Tibial artery (tissue), 4 donors: ENCODE measurements at regions of chr3 and their contacts with region 1.

Region 1: DNA sequence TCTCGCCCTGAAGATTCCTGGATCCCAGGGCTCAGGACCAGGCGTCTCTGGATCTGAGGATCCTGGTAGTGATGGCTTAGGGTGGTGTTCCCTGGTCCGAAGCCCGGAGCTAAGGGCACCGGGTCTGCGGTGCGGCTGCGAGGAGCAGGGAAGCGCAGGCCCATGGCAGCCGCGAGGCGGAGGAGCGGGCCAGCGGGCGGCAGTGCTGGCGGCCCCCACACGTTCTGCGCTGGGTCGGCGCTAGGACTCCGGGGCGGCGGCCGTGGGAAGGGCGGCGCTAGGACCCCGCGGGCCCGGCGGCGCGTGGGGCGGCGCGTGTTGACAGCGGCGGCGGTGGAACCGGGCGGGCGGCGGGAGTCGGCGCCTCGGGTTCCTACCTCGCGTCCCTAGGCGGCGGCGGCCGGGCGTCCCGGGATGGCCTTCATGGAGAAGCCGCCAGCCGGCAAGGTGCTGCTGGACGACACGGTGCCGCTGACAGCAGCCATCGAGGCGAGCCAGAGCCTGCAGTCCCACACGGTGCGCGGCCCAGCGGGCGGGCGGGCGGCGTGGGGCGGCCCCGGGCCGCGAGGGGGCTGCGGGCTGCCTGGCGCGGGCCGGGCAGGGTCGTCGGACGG is at the start of gene PXK:
- DNase-seq: peak; percentile 66 to 89
- H3K4me3 ChIP-seq: peak within 1 kb of the TSS; percentile 89 to 90
- H3K27ac ChIP-seq: peak within 1 kb of the TSS; percentile 59 to 71
- H3K4me1 ChIP-seq: peaks cover 0 to 39% (median 15%) of the 10 kb centered on the region in 4 donors
- H3K27me3 ChIP-seq: no peaks in the 10 kb centered on the region
- CTCF ChIP-seq: peak in 1 of 2 experiments; percentile 19

Region 2: DNA sequence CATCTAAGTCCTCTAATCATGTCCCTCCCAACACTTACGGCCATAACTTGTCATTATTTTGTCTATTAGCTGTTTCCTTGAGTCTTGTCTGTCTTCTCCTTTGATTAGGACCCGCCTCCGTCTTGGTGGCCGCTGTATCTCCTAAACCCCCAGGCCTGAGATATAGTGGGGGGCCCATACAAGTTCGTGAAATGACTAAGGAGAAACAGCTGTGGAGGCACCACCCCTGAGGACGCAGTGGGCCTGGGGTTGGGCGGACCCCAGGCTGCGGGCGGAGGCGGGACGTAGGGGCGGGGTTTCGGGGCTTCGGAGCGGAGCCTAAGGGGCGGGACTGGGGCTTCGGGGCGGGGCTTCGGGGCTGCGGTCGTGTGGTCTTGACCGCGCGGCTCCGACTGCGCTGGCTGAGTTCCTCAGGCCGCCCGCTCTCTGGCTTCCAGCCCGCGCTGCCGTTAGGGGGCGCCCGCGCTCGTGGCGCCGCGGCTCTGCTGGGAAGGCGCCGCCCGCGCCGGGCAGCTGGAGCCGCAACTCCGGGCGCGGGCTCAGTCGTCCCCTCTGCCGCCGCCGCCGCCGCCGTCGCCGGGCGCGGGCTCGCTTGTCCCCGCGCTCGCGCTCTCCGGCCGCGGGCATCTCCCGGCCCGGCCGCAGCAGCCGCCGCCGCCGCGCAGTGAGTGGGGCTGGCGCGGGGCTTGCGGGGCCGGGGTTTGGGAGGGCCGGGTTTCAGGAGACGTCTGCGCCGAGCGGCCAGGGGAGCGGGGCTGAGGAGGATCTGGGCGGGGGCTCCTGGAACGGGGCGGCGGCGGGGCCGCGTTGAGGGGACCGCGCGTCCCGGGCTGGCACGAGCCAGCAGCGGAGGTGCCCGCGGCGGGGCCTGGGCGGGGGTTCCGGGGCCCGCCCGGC is 159.1 kb after region 1 on chr3 and contains the start of gene KCTD6:
- intact Hi-C with region 1: loop called (anchors 2 kb)
- DNase-seq: peak; percentile 83 to 95
- H3K4me3 ChIP-seq: peak within 1 kb of the TSS; percentile 84 to 90
- H3K27ac ChIP-seq: peak within 1 kb of the TSS; percentile 80 to 87
- H3K4me1 ChIP-seq: peaks cover 0 to 51% (median 33%) of the 10 kb centered on the region in 4 donors
- H3K27me3 ChIP-seq: no peaks in the 10 kb centered on the region
- CTCF ChIP-seq: peak; percentile 62 to 77